ENCODE measurements at regions of chr7 and their contacts with region 1.

Region 1: GRCh38 chr7:134316539-134317344 is at the start of gene SLC35B4:
- DNase-seq: peak; percentile 88 to 97 (median 94)
- ATAC-seq: peak; percentile 97
- H3K4me3 ChIP-seq: peak within 1 kb of the TSS; percentile 88 to 98
- H3K4me3 Mint-ChIP-seq: peak within 1 kb of the TSS; percentile 97
- H3K27ac ChIP-seq: peak within 1 kb of the TSS; percentile 58 to 72
- H3K27ac Mint-ChIP-seq: peak within 1 kb of the TSS; percentile 92
- H3K4me1 ChIP-seq: peaks cover 14% of the 10 kb centered on the region
- H3K4me1 Mint-ChIP-seq: peaks cover 25% of the 10 kb centered on the region
- H3K27me3 ChIP-seq: no peaks in the 10 kb centered on the region
- H3K27me3 Mint-ChIP-seq: peaks cover 3% of the 10 kb centered on the region
- CTCF ChIP-seq: peak; percentile 29
- total RNA-seq, gene SLC35B4: 5.1 to 7.0 TPM

Region 2: DNA sequence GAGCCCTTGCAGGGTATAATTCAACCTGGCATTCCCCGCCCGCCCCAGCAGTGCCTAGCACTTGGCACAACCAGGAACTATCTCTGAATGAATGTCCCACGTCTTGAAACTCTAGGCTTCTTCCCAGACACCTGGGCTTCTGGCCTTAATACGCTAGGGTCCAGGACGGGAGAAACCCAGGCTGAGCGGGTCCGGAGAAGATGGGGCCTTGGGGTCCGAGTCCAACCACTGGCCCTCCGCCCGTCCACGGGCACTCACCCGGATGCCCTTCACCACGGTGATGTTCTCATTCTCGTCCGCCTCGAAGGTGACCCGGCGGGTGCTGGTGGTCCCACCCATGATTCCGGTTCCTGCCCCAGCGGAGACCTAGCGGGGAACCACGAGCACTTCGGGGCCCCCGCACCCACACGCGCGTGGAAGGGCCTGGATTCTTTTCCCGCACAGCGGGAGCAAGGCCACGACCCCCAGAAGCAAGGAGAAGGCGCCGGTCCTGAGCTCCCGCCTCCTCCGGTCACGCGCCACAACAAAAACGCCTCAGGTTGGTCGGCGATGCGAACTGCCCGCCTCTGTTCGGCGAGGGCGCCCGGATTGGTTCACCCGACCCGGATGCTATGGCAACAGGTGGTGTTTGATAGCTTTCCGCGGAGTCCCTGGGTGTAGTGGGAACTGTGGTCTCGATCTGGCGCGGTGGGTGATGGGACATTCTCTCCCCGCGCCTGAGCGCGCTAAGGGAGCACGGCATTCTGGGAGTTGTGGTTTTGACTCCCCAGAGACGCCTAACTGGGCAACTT is 1234.9 kb before region 1 on chr7 and contains the start of gene CHCHD3:
- CTCF ChIA-PET with region 1: no interaction called
- POLR2A ChIA-PET with region 1: no interaction called
- intact Hi-C with region 1: loop called in 1 of 2 experiments (anchors 1 kb)
- DNase-seq: peak; percentile 88 to 98 (median 96)
- ATAC-seq: peak; percentile 98
- H3K4me3 ChIP-seq: peak within 1 kb of the TSS; percentile 94 to 96
- H3K4me3 Mint-ChIP-seq: peak within 1 kb of the TSS; percentile 92
- H3K27ac ChIP-seq: peak within 1 kb of the TSS; percentile 92 to 94
- H3K27ac Mint-ChIP-seq: peak within 1 kb of the TSS; percentile 96
- H3K4me1 ChIP-seq: peaks cover 16% of the 10 kb centered on the region
- H3K4me1 Mint-ChIP-seq: peaks cover 33% of the 10 kb centered on the region
- H3K27me3 ChIP-seq: no peaks in the 10 kb centered on the region
- H3K27me3 Mint-ChIP-seq: peaks cover 3% of the 10 kb centered on the region
- CTCF ChIP-seq: no peak
- total RNA-seq, gene CHCHD3: 19.0 to 20.4 TPM

Region 3: DNA sequence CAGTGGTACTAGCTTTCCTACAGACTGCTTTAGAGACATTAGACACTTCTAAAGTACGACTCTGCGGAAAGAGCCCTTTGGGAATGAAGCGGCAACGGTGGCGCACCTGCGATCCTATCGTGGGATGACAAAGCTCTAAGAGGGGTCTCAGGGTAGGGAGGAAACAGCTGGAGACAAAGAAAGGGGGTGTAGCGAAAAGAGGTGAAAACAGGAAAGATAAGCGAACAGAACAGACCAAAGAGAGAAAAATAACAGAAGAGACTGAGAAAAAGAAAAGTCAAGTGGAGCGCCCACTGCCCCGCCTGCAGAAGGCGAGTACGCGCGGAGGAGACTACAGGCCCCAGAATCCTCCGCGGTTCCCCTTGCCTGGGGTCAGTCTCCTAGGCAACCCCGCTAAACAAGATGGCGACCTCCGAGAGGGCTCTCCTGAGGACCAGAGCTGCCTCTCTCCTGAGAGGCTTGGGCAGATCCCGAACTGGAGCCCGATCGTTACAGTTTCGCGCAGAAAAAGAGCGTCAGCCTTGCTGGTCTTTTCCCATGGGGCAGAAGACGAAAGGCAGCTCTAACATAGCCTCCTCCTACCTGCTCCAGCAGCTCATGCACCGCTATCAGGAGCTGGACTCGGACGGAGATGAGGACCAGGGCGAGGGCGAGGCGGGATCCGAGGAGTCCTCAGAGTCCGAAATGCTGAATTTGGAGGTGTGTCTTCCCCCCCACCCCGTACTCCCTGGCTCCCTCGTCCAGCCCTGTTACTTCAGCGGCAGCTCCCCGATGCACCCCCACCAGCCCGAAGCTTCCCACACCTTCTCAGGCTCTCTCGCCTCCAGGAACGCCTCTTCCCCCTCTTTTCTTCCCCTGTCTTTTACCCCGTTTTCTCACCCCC is 189.5 kb before region 1 on chr7 and contains the start of gene LRGUK:
- CTCF ChIA-PET with region 1: no interaction called
- POLR2A ChIA-PET with region 1: no interaction called
- intact Hi-C with region 1: loop called (anchors 1 kb)
- DNase-seq: peak; percentile 59 to 88 (median 79)
- ATAC-seq: peak; percentile 100
- H3K4me3 ChIP-seq: peak within 1 kb of the TSS; percentile 61 to 76
- H3K4me3 Mint-ChIP-seq: peak within 1 kb of the TSS; percentile 85
- H3K27ac ChIP-seq: no peak within 1 kb of the TSS
- H3K27ac Mint-ChIP-seq: no peak within 1 kb of the TSS
- H3K4me1 ChIP-seq: peaks cover 10% of the 10 kb centered on the region
- H3K4me1 Mint-ChIP-seq: peaks cover 15% of the 10 kb centered on the region
- H3K27me3 ChIP-seq: peaks cover 0 to 4% of the 10 kb centered on the region in 2 experiments
- H3K27me3 Mint-ChIP-seq: peaks cover 18% of the 10 kb centered on the region
- CTCF ChIP-seq: no peak
- total RNA-seq, gene LRGUK: 0.42 to 0.71 TPM

Region 4: DNA sequence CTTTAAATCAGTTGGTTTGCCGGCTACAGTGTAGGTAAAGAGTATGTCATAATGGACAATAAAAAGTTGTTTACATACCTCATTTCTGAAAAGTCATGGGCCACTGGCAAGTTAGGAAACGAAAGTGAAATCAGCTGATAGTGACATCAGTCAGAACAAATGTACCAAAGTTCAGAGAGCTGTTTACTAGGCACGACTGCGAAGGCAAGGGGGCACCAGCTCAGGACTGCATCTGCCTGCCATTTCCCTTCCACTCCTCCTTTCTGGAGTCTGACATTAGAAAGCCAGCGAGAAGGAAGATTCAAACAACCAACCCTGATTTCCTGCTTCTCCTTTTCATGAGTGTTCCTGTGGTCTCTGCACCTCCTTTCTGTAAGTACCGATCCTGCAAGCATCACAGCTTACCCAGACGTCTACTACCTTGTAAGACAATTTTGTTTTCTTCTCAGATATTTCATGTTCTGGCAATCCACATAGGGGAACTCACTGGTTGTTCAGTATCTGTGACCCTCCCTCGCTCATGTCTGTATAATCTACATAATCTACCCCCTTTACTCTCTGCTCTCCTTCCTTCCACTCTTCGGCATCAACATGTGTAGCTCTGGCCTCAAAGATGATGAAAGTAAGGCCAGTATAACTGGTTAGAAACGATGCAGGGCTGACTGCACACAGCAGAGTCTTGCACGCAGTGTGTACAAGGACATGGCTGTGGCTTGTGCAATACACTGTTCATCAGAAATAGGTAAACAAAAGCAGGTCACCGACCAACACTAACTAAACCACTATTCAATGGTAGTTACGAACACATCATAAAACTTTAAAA is 831.4 kb after region 1 on chr7 and contains the start of gene TMEM140:
- CTCF ChIA-PET with region 1: no interaction called
- POLR2A ChIA-PET with region 1: interaction called, 6 read pairs
- intact Hi-C with region 1: loop called in 1 of 2 experiments (anchors 10 kb)
- DNase-seq: peak; percentile 36 to 91 (median 63)
- ATAC-seq: peak; percentile 78
- H3K4me3 ChIP-seq: peak within 1 kb of the TSS; percentile 60 to 70
- H3K4me3 Mint-ChIP-seq: peak within 1 kb of the TSS; percentile 87
- H3K27ac ChIP-seq: peak within 1 kb of the TSS; percentile 92 to 97
- H3K27ac Mint-ChIP-seq: peak within 1 kb of the TSS; percentile 97
- H3K4me1 ChIP-seq: peaks cover 47% of the 10 kb centered on the region
- H3K4me1 Mint-ChIP-seq: peaks cover 80% of the 10 kb centered on the region
- H3K27me3 ChIP-seq: no peaks in the 10 kb centered on the region
- H3K27me3 Mint-ChIP-seq: no peaks in the 10 kb centered on the region
- CTCF ChIP-seq: no peak
- total RNA-seq, gene TMEM140: 18.8 to 21.8 TPM

Region 5: GRCh38 chr7:135509903-135510602 is 1193.3 kb after region 1 on chr7 and contains the start of gene CNOT4:
- CTCF ChIA-PET with region 1: no interaction called
- POLR2A ChIA-PET with region 1: interaction called, 4 read pairs
- intact Hi-C with region 1: loop called (anchors 2 to 5 kb)
- DNase-seq: peak; percentile 94 to 98 (median 97)
- ATAC-seq: peak; percentile 94
- H3K4me3 ChIP-seq: peak within 1 kb of the TSS; percentile 80 to 84
- H3K4me3 Mint-ChIP-seq: no peak within 1 kb of the TSS
- H3K27ac ChIP-seq: peak within 1 kb of the TSS; percentile 78 to 95
- H3K27ac Mint-ChIP-seq: no peak within 1 kb of the TSS
- H3K4me1 ChIP-seq: peaks cover 26% of the 10 kb centered on the region
- H3K4me1 Mint-ChIP-seq: peaks cover 14% of the 10 kb centered on the region
- H3K27me3 ChIP-seq: no peaks in the 10 kb centered on the region
- H3K27me3 Mint-ChIP-seq: no peaks in the 10 kb centered on the region
- CTCF ChIP-seq: no peak
- total RNA-seq, gene CNOT4: 24.8 to 25.9 TPM

Region 6: DNA sequence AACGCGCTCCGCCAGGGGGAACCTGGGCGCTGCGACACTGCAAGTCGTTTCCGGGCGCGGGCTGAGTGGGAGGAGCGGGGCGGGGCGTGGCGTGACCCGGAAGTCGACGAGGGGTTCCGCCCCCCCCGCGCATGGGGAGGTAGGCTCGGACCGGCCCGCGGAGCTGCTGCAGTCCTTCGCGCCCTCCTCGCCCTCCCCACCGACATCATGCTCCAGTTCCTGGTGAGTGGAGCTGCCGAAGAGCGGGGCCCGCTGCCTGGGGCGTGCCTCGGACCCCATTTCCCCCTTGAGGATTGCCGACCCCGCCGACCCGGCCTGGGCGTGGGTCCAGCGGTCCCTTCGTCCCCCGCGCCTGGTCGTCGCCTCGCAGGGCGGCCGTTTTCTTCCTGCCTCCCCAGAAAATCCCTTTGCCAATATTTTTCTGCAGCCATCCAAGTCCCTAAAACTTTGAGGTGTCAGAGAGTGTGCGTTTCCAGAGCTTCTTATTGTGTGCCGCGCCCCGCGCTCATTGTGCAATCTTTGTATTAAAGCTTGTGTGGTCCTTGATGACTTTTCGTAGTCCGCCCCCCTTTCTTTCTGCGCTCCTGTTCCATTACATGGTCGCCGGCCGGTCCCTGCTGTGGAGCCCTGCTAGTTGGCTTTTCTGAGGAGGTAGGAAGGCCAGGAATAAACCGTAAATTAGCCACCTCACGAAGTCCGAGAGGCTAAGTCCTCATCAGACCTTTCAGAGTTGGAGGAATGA is 1345.8 kb after region 1 on chr7 and contains the start of gene STMP1:
- CTCF ChIA-PET with region 1: no interaction called
- POLR2A ChIA-PET with region 1: no interaction called
- intact Hi-C with region 1: loop called (anchors 2 to 5 kb)
- DNase-seq: peak; percentile 91 to 99 (median 96)
- ATAC-seq: peak; percentile 99
- H3K4me3 ChIP-seq: peak within 1 kb of the TSS; percentile 72 to 76
- H3K4me3 Mint-ChIP-seq: peak within 1 kb of the TSS; percentile 90
- H3K27ac ChIP-seq: peak within 1 kb of the TSS; percentile 53 to 65
- H3K27ac Mint-ChIP-seq: peak within 1 kb of the TSS; percentile 88
- H3K4me1 ChIP-seq: peaks cover 20% of the 10 kb centered on the region
- H3K4me1 Mint-ChIP-seq: peaks cover 41% of the 10 kb centered on the region
- H3K27me3 ChIP-seq: no peaks in the 10 kb centered on the region
- H3K27me3 Mint-ChIP-seq: no peaks in the 10 kb centered on the region
- CTCF ChIP-seq: peak; percentile 64
- total RNA-seq, gene STMP1: 9.4 to 11.5 TPM